Activated naive CD4-positive, alpha-beta T cell treated with anti-CD3 and anti-CD28 coated beads for 36 hours (primary cell): ENCODE measurements at regions of chr1 and their contacts with region 1.

Region 1: DNA sequence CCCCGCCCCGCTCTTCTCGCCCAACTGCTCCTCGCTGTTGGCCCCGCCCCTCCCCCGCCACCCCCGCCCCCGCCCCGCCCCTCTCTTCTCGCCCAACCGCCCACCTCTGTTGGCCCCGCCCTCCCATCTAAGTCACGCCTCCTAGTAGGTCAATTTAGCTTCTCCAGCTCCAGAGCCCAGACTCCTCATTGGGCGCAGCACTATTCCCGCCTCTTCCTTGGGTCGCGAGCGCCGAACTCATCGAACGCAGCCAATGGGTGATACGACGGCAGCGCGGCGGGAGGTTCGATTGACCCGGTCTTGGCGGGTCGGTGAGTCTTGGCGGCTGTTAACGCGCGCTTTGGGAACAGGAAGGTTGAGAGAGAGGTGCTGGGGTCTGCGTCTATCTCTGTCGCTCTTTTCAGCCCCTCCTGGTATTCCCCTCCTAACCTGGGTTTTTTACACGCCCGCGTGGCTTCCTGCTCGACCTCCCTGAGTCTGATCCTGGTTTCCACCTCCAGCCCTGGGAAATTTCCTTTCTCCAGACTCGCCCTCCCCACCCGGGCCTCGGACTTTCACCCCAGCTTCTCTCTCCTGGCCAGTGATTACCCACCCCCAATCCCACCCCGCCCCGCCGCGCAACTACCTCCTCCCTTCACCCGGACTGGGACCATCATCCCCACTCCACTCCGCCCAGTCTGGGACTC is at the start of gene RAD54L:
- DNase-seq: peak; percentile 99
- H3K4me3 Mint-ChIP-seq: peak within 1 kb of the TSS; percentile 99
- H3K27ac Mint-ChIP-seq: peak within 1 kb of the TSS; percentile 92
- H3K4me1 Mint-ChIP-seq: peaks cover 23% of the 10 kb centered on the region
- H3K27me3 Mint-ChIP-seq: no peaks in the 10 kb centered on the region
- total RNA-seq, gene RAD54L: 83.9 to 88.0 TPM

Region 2: GRCh38 chr1:45339789-45340570 is 907.6 kb before region 1 on chr1 and contains the starts of genes MUTYH and TOE1:
- CTCF ChIA-PET with region 1: no interaction called
- intact Hi-C with region 1: loop called (anchors 2 kb)
- DNase-seq: peak; percentile 95
- H3K4me3 Mint-ChIP-seq: peak within 1 kb of the TSS; percentile 100
- H3K27ac Mint-ChIP-seq: peak within 1 kb of the TSS; percentile 100
- H3K4me1 Mint-ChIP-seq: peaks cover 35% of the 10 kb centered on the region
- H3K27me3 Mint-ChIP-seq: no peaks in the 10 kb centered on the region
- total RNA-seq, gene MUTYH: 42.0 to 45.0 TPM
- total RNA-seq, gene TOE1: 23.0 to 23.8 TPM

Region 3: DNA sequence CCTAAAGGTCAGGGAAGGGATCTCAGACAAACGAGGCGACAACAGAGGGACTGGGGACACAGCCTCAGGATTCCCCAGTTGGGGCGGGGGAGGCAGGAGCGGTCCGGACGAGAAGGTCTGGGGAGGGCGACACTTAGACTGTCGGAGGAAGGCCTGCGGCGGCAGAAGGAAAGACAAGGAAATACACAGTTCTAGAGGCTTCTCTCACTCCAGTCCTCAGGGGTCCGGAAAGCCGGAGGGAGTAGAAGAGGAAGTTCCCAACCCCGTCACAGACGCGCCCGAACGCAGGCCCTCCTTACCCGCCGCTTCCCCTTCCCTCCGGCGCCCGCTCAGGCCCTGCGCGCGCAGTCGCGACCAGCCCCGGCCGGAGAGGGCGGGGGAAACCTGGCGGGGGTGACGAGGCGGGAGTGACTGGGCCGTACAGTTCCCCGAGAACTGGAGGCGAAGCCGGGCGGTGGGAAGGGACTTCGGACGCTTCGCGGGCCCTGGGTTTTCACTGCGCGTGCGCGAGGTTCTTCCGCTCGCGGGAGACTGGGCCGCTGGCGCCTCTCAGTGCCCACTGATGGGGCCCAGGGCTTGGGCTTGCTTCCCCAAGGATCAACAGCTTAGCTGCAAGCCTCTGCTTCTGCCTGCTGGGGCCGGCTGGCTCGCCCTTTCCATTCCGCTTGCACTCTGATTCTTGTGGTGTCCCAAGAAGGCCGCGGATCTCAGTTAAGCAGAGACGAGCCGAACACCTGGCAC is 497.1 kb before region 1 on chr1 and contains the start of gene IPP:
- CTCF ChIA-PET with region 1: no interaction called
- intact Hi-C with region 1: loop called (anchors 5 kb)
- DNase-seq: peak; percentile 96
- H3K4me3 Mint-ChIP-seq: peak within 1 kb of the TSS; percentile 95
- H3K27ac Mint-ChIP-seq: peak within 1 kb of the TSS; percentile 97
- H3K4me1 Mint-ChIP-seq: peaks cover 31% of the 10 kb centered on the region
- H3K27me3 Mint-ChIP-seq: no peaks in the 10 kb centered on the region
- total RNA-seq, gene IPP: 19.1 to 20.2 TPM

Region 4: GRCh38 chr1:46102769-46103476 is 144.7 kb before region 1 on chr1:
- CTCF ChIA-PET with region 1: no interaction called
- intact Hi-C with region 1: no loop called
- DNase-seq: peak; percentile 10
- H3K4me3 Mint-ChIP-seq: no peak overlapping the region
- H3K27ac Mint-ChIP-seq: no peak overlapping the region
- H3K4me1 Mint-ChIP-seq: peaks cover 5% of the 10 kb centered on the region
- H3K27me3 Mint-ChIP-seq: peaks cover under 1% of the 10 kb centered on the region

Region 5: GRCh38 chr1:46197964-46198811 is 49.4 kb before region 1 on chr1 and contains the start of gene POMGNT1:
- CTCF ChIA-PET with region 1: interaction called, 3 read pairs
- intact Hi-C with region 1: loop called (anchors 2 kb)
- DNase-seq: peak; percentile 73
- H3K4me3 Mint-ChIP-seq: peak within 1 kb of the TSS; percentile 81
- H3K27ac Mint-ChIP-seq: peak within 1 kb of the TSS; percentile 70
- H3K4me1 Mint-ChIP-seq: peaks cover 29% of the 10 kb centered on the region
- H3K27me3 Mint-ChIP-seq: no peaks in the 10 kb centered on the region
- total RNA-seq, gene POMGNT1: 32.4 to 32.9 TPM

Region 6: DNA sequence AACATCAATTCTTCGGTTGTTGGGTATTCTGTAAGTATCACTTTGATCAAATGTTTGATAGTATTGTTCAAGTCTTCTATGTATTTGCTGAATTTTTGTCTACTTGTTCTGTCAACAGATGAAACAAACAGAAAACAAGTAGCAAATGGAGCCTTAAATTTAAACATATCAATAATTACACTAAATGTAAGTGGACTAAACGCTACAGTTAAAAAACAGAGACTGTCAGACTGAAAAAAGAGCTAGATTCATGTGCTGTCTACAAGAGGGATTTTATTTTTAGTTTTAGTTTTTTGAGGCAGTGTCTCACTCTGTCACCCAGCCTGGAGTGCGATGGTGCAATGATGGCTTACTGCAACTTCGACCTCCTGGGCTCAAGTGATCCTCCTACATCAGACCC is 10.7 kb before region 1 on chr1:
- CTCF ChIA-PET with region 1: interaction called, 31 read pairs
- intact Hi-C with region 1: no loop called
- DNase-seq: no peak
- H3K4me3 Mint-ChIP-seq: no peak overlapping the region
- H3K27ac Mint-ChIP-seq: no peak overlapping the region
- H3K4me1 Mint-ChIP-seq: no peaks in the 10 kb centered on the region
- H3K27me3 Mint-ChIP-seq: no peaks in the 10 kb centered on the region

Region 7: DNA sequence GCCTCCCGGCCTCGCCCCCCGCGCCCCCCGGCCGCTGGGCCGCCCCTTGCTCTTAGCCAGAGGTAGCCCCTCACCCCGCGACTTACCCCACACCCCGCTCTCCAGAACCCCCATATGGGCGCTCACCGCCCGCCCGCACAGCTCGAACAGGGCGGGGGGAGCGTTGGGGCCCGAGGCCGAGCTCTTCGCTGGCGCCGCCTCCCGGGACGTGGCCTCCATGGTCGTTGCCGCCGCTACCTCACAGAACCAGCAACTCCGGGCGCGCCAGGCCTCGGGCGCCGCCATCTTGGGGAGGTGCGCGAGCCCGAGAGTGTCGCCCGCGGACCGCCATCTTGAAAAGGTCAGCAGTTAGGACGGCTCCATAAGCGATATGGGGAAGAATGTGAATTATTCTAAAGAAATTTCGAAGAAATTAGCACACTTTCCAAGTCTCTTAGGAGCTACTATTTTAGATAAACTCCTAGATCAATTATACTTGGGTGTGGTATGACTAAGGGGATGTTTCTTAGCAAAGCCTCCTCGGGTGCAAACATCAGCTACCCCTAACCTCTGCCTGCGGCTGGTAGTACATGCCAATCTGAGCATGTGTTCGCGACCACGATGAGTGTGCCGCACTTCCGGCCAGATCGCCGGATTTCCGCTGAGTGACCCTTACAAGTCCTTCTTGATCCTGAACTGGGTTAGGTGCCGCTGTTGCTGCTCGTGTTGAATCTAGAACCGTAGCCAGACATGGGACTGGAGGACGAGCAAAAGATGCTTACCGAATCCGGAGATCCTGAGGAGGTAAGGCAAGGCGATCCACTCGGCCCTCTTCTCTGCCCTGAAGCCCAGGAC is 55.7 kb after region 1 on chr1 and contains the starts of genes LRRC41 and UQCRH:
- CTCF ChIA-PET with region 1: interaction called, 6 read pairs
- intact Hi-C with region 1: loop called (anchors 1 kb)
- DNase-seq: peak; percentile 93
- H3K4me3 Mint-ChIP-seq: peak within 1 kb of the TSS; percentile 98
- H3K27ac Mint-ChIP-seq: peak within 1 kb of the TSS; percentile 94
- H3K4me1 Mint-ChIP-seq: peaks cover 45% of the 10 kb centered on the region
- H3K27me3 Mint-ChIP-seq: no peaks in the 10 kb centered on the region
- total RNA-seq, gene LRRC41: 28.0 to 29.8 TPM
- total RNA-seq, gene UQCRH: 403 to 409 TPM